ENCODE measurements at regions of chr1 and their contacts with region 1.

Region 1: DNA sequence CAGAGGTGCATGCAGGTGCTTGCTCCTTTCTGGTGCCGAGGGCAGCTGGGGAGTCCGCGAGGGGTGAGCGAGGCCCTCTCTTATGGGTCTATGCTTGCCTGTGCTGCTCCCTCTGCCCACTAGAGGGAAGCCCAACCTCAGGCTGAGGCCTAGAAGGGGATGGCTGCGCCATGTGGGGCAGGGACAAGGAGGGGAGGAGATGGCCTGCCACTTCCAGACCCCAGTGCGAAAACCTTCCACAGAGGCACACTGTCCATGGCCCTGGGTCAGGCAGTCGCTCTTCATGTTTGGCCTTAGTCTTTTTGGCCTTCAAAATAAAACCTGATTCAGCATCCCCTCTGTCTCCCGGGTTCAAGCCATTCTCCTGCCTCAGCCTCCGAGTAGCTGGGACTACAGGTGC is 14.0 kb downstream of the RHBG start:
- DNase-seq: peak; percentile 72
- ATAC-seq: peak; percentile 82
- H3K4me3 Mint-ChIP-seq: no peak overlapping the region
- H3K27ac Mint-ChIP-seq: no peak overlapping the region
- H3K4me1 Mint-ChIP-seq: peaks cover 10% of the 10 kb centered on the region
- H3K27me3 Mint-ChIP-seq: peaks cover 15% of the 10 kb centered on the region

Region 2: GRCh38 chr1:156262461-156263287 is 120.3 kb before region 1 on chr1:
- CTCF ChIA-PET with region 1: no interaction called
- POLR2A ChIA-PET with region 1: no interaction called
- DNase-seq: no peak
- ATAC-seq: no peak
- H3K4me3 Mint-ChIP-seq: no peak overlapping the region
- H3K27ac Mint-ChIP-seq: peak overlapping the region; percentile 2
- H3K4me1 Mint-ChIP-seq: peaks cover 7% of the 10 kb centered on the region
- H3K27me3 Mint-ChIP-seq: no peaks in the 10 kb centered on the region

Region 3: DNA sequence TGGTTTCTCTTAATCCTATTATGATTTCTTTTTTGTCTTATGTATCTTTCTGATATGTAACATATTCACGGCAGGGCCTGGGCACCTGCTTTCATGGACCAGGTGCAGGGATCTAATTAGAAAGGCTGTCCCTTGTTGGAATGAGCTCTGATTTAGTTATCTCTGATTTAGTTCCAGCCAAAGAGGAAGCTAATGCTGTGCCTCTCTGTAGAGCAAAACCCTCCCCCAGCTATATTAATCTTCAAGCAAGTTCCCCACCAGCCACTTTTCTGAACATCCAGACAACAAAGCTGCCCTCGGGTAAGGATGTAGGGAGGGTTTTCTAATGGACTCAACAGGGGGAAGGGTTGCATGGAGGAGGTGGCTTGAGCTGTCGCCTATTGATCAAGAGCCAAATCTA is 38.6 kb before region 1 on chr1:
- CTCF ChIA-PET with region 1: interaction called, 15 read pairs
- POLR2A ChIA-PET with region 1: no interaction called
- DNase-seq: no peak
- ATAC-seq: no peak
- H3K4me3 Mint-ChIP-seq: no peak overlapping the region
- H3K27ac Mint-ChIP-seq: no peak overlapping the region
- H3K4me1 Mint-ChIP-seq: peaks cover under 1% of the 10 kb centered on the region
- H3K27me3 Mint-ChIP-seq: peaks cover 25% of the 10 kb centered on the region

Region 4: GRCh38 chr1:156406251-156406650 is 23.2 kb after region 1 on chr1:
- CTCF ChIA-PET with region 1: interaction called, 15 read pairs
- POLR2A ChIA-PET with region 1: no interaction called
- DNase-seq: no peak
- ATAC-seq: no peak
- H3K4me3 Mint-ChIP-seq: no peak overlapping the region
- H3K27ac Mint-ChIP-seq: no peak overlapping the region
- H3K4me1 Mint-ChIP-seq: no peaks in the 10 kb centered on the region
- H3K27me3 Mint-ChIP-seq: peaks cover 18% of the 10 kb centered on the region

Region 5: GRCh38 chr1:156445789-156446263 is 62.8 kb after region 1 on chr1:
- CTCF ChIA-PET with region 1: interaction called, 562 read pairs
- POLR2A ChIA-PET with region 1: interaction called, 18 read pairs
- DNase-seq: peak; percentile 84
- ATAC-seq: peak; percentile 89
- H3K4me3 Mint-ChIP-seq: no peak overlapping the region
- H3K27ac Mint-ChIP-seq: no peak overlapping the region
- H3K4me1 Mint-ChIP-seq: peaks cover 9% of the 10 kb centered on the region
- H3K27me3 Mint-ChIP-seq: peaks cover 57% of the 10 kb centered on the region

Region 6: DNA sequence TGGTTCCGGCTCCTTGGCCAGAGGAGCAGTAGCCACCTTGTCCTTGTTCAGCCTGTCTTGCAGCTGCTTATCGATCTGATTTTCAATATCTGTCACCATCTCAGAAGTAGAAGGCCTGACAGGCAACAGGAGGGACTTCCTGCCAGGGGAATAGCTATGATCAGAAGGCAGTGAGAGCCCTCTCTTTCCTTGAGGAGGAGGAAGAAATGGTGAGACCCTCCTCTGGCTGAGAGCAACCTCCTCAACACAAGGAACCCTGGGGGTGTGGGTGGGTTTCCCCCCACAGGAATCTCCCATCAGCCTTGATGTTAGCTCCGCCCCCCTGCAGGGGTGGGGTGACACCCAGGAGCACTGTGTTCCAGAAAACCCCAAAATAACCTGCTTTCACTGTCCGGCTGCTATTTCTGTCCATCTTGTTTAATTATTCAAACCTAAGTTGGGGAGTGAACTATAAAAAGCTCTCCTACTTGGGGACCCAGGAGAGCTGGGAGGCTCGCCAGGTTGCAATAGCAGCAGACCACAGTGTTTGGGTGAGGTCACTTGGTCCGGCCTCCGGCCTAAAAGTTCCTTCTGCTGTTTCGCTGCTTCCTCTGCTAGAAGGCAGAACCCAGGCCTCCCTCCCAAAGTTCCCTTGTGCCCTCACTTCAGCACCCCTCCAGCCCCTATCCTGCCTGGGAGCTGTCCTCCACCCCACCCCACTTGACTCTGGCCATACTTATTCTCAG is 125.3 kb after region 1 on chr1:
- CTCF ChIA-PET with region 1: interaction called, 11 read pairs
- POLR2A ChIA-PET with region 1: no interaction called
- DNase-seq: no peak
- ATAC-seq: no peak
- H3K4me3 Mint-ChIP-seq: peak overlapping the region; percentile 77
- H3K27ac Mint-ChIP-seq: peak overlapping the region; percentile 91
- H3K4me1 Mint-ChIP-seq: peaks cover 61% of the 10 kb centered on the region
- H3K27me3 Mint-ChIP-seq: peaks cover 3% of the 10 kb centered on the region

Region 7: GRCh38 chr1:156591432-156592157 is 208.6 kb after region 1 on chr1 and contains the start of gene NAXE:
- CTCF ChIA-PET with region 1: interaction called, 10 read pairs
- POLR2A ChIA-PET with region 1: no interaction called
- DNase-seq: peak; percentile 74
- ATAC-seq: peak; percentile 96
- H3K4me3 Mint-ChIP-seq: peak within 1 kb of the TSS; percentile 82
- H3K27ac Mint-ChIP-seq: peak within 1 kb of the TSS; percentile 87
- H3K4me1 Mint-ChIP-seq: peaks cover 24% of the 10 kb centered on the region
- H3K27me3 Mint-ChIP-seq: no peaks in the 10 kb centered on the region
- total RNA-seq, gene NAXE: 54.3 to 60.3 TPM

Region 8: GRCh38 chr1:156625436-156626078 is 242.5 kb after region 1 on chr1:
- CTCF ChIA-PET with region 1: interaction called, 13 read pairs
- POLR2A ChIA-PET with region 1: no interaction called
- DNase-seq: peak; percentile 70
- ATAC-seq: peak; percentile 57
- H3K4me3 Mint-ChIP-seq: peak overlapping the region; percentile 40
- H3K27ac Mint-ChIP-seq: no peak overlapping the region
- H3K4me1 Mint-ChIP-seq: peaks cover 12% of the 10 kb centered on the region
- H3K27me3 Mint-ChIP-seq: peaks cover 47% of the 10 kb centered on the region